Head of caudate nucleus (tissue), 42 donors: ENCODE measurements at regions of chr19 and their contacts with region 1.

Region 1: GRCh38 chr19:42794765-42795164 is 29.3 kb upstream of the PSG8 start:
- DNase-seq: no peak

Region 2: GRCh38 chr19:42846597-42846996 is 51.8 kb after region 1 on chr19:
- intact Hi-C with region 1: no loop called
- DNase-seq: no peak

Region 3: GRCh38 chr19:42857561-42857901 is 62.8 kb after region 1 on chr19:
- intact Hi-C with region 1: loop called (anchors 5 kb)
- DNase-seq: no peak

Region 4: GRCh38 chr19:42881229-42881628 is 86.5 kb after region 1 on chr19:
- intact Hi-C with region 1: no loop called
- DNase-seq: no peak